Activated CD4-positive, alpha-beta T cell treated with anti-CD3 and anti-CD28 coated beads for 36 hours (primary cell): ENCODE measurements at regions of chr14 and their contacts with region 1.

Region 1: GRCh38 chr14:55191203-55192053 is at the start of gene DLGAP5:
- DNase-seq: peak; percentile 95
- ATAC-seq: peak; percentile 99
- H3K4me3 Mint-ChIP-seq: peak within 1 kb of the TSS; percentile 91
- H3K27ac Mint-ChIP-seq: peak within 1 kb of the TSS; percentile 84
- H3K4me1 Mint-ChIP-seq: peaks cover 29% of the 10 kb centered on the region
- H3K27me3 Mint-ChIP-seq: no peaks in the 10 kb centered on the region
- total RNA-seq, gene DLGAP5: 97.4 to 100 TPM

Region 2: GRCh38 chr14:55026793-55027561 is 164.5 kb before region 1 on chr14 and contains the starts of genes SOCS4 and WDHD1:
- CTCF ChIA-PET with region 1: no interaction called
- POLR2A ChIA-PET with region 1: no interaction called
- intact Hi-C with region 1: loop called in 1 of 2 experiments (anchors 1 kb)
- DNase-seq: peak; percentile 98
- ATAC-seq: peak; percentile 93
- H3K4me3 Mint-ChIP-seq: peak within 1 kb of the TSS; percentile 95
- H3K27ac Mint-ChIP-seq: peak within 1 kb of the TSS; percentile 97
- H3K4me1 Mint-ChIP-seq: peaks cover 47% of the 10 kb centered on the region
- H3K27me3 Mint-ChIP-seq: no peaks in the 10 kb centered on the region
- total RNA-seq, gene SOCS4: 18.4 to 21.3 TPM
- total RNA-seq, gene WDHD1: 64.4 to 71.1 TPM

Region 3: GRCh38 chr14:55102141-55102621 is 89.2 kb before region 1 on chr14:
- CTCF ChIA-PET with region 1: no interaction called
- POLR2A ChIA-PET with region 1: interaction called, 4 read pairs
- intact Hi-C with region 1: loop called in 1 of 2 experiments (anchors 1 kb)
- DNase-seq: peak; percentile 72
- ATAC-seq: peak; percentile 62
- H3K4me3 Mint-ChIP-seq: peak overlapping the region; percentile 49
- H3K27ac Mint-ChIP-seq: peak overlapping the region; percentile 89
- H3K4me1 Mint-ChIP-seq: peaks cover 43% of the 10 kb centered on the region
- H3K27me3 Mint-ChIP-seq: no peaks in the 10 kb centered on the region

Region 4: DNA sequence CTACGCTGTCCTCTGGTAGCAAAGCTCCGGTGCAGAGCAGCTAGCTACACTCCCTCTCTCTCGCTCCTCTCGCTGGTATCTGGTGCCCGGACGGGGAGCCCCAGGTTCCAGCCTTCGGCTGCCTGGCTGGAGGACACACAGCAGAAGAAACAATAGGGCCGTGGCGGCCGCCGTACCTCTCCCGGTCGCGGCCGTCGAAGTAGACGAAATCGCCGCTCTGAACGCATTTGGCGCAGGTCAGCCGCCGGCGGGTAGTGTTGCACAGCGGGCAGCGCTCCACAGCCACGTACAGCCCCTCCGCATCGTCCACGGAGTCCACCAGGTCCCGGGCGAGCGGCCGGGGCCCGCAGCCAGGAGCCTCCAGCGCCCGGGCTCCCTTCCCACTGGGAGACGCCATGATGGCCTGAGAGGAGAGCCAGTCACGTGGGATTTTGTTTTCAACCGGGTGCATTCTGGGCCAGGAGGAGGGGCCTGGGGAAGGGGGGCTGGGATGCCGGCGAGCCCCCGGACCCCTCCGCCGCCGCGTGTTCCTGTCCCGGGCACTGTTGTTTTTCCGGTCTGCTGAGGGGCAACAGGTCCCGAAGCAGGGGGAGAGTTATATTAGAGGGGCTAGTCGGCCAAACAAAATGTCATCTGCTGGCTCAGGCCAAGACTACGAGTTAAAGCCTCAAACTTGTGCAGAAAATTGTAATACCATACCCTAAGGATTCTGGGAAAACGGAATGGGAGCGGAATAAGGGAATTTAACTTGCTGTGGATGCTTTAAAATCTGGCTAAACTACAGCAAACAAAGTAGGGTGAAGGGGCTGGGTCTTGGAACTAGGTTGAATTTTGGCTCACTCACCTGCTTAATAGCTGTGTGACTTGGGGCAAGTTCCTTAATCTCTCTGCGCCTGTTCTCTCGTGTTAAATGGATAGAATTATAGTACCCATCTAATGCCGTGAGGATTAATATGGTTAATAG is 220.3 kb after region 1 on chr14 and contains the start of gene ATG14:
- CTCF ChIA-PET with region 1: no interaction called
- POLR2A ChIA-PET with region 1: no interaction called
- intact Hi-C with region 1: loop called in 1 of 2 experiments (anchors 1 kb)
- DNase-seq: peak; percentile 88
- ATAC-seq: peak; percentile 99
- H3K4me3 Mint-ChIP-seq: peak within 1 kb of the TSS; percentile 79
- H3K27ac Mint-ChIP-seq: peak within 1 kb of the TSS; percentile 82
- H3K4me1 Mint-ChIP-seq: peaks cover 27% of the 10 kb centered on the region
- H3K27me3 Mint-ChIP-seq: no peaks in the 10 kb centered on the region
- total RNA-seq, gene ATG14: 5.0 to 5.1 TPM

Region 5: DNA sequence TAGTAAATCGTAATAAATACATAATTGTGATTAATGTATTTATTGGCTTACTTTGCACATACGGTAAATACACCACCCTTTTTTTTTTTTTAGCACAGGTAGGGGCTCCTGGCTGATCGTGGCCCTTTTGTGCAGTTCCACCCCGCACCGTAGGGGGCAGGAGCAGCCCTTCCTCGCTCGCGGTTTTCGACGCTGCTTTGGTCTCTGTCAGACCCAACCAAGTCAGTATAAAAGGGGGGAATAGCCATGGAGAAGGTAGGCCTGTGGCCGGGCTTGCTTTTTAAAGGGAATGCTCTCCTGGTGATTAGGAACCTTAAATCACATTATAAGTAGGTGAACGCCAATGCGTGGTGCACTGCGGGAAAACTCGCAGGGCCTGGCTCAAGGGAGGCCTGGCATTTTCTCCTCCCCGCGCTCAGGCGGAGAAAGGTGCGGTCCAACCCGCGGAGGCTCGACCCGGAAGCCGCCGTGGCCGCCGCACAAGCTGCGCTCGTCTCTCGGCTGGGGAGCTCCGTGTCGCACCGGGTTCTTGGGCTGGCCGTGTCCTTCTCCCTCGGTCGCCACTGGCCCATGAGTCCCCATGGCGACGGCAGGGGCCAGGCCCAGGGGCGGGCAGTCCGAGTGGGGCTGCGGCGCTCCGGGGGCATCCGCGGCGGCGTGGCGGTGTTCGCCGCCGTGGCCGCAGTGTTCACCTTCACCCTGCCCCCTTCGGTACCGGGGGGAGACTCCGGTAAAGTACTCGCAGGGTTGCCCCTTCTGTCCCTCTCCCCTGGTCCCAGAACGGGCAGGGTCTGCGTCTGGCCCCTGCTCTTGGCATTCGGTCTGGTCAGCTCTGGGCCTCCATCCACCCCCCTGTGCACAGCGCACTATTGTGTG is 1388.2 kb after region 1 on chr14 and contains the start of gene TMEM260:
- CTCF ChIA-PET with region 1: no interaction called
- POLR2A ChIA-PET with region 1: no interaction called
- intact Hi-C with region 1: loop called in 1 of 2 experiments (anchors 5 kb)
- DNase-seq: peak; percentile 93
- ATAC-seq: peak; percentile 89
- H3K4me3 Mint-ChIP-seq: peak within 1 kb of the TSS; percentile 82
- H3K27ac Mint-ChIP-seq: peak within 1 kb of the TSS; percentile 95
- H3K4me1 Mint-ChIP-seq: peaks cover 33% of the 10 kb centered on the region
- H3K27me3 Mint-ChIP-seq: no peaks in the 10 kb centered on the region
- total RNA-seq, gene TMEM260: 15.2 to 17.9 TPM